PC-9 (cell line): ENCODE measurements at regions of chr1 and their contacts with region 1.

Region 1: GRCh38 chr1:15152318-15153183 is 996 bp upstream of the TMEM51 start:
- DNase-seq: peak; percentile 73 to 80
- H3K4me3 ChIP-seq: peak overlapping the region; percentile 68
- H3K27ac ChIP-seq: peak overlapping the region; percentile 77
- H3K4me1 ChIP-seq: 0 out of 2 replicates have a peak, but pooled peaks cover under 1% of the 10 kb centered on the region
- H3K27me3 ChIP-seq: no peaks in the 10 kb centered on the region
- CTCF ChIP-seq: peak; percentile 61

Region 2: DNA sequence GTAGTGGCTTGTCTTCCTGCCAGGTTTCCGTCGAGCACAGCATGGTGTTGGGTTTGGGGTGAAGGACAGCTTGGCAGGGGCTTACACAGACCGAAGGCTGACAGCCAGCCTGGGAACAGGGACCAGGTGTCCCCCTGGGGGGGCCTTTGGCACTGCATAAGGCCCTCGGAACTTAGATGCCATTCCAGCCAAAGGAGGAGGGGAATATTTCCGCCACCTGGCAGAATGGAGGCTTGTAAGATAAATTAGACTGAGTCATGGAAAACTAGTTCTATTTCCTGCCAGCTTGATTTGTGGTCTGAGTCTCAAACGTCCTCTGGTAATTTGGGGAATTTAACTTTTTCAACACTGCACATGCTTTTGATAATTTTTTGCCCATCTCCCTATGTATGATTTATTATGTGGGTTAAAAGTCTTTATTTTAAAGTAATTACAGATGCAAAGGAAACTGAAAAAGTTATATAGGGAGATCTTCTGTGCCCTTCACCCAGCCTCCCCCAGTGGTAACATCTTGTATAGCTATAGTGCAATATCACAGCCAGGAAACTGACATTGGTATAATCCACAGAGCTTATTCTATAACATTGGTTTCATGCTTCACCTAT is 10.5 kb before region 1 on chr1:
- CTCF ChIA-PET with region 1: interaction called, 3 read pairs
- POLR2A ChIA-PET with region 1: interaction called, 10 read pairs
- intact Hi-C with region 1: no loop called
- DNase-seq: peak; percentile 29 to 55
- H3K4me3 ChIP-seq: no peak overlapping the region
- H3K27ac ChIP-seq: no peak overlapping the region
- H3K4me1 ChIP-seq: peaks cover 28% of the 10 kb centered on the region
- H3K27me3 ChIP-seq: no peaks in the 10 kb centered on the region
- CTCF ChIP-seq: no peak; the same call in 1 of the 2 replicates

Region 3: DNA sequence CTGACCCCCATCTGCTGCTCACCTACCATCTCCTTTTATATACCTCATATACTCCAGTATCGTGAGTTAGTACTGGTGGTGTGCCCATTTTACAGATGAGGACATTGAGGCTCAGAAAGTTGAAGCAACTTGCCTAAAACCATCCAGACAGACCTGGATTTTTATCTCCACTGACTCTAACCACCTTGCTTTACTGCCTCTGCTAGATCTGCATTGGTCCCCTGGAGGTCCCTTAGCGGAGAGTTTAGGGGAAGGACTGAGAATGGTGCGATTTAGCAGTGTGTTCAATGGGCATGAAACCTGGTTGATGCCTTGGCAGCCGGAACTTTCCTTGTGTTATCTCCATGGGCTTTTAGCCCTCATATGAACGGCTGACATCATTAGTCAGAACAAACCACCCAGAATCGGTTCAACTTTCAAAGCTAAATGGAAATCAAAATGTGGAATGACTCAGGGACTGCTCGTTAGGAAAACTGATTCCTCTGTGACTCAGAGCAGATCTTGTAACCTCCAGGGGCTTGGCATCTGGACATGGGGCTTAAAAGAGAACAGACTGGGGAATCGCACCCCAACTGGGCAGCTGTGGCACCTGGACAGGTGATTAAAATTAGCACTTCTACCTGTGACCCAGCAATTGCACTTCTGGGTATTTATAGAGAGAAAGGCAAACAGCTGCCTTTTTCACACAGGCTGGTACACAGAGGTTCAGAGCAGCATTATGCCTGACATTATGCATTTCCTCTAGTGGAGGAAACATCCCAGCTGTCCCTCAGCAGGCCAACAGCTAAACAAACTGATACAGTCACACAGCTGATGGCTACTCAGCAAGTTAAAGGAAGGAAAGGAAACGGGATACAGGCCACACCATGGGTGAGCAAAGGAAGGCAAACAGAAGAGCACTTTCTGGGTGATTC is 26.3 kb after region 1 on chr1:
- CTCF ChIA-PET with region 1: no interaction called
- POLR2A ChIA-PET with region 1: interaction called, 24 read pairs
- intact Hi-C with region 1: loop called (anchors 2 kb)
- DNase-seq: peak; percentile 61 to 89
- H3K4me3 ChIP-seq: no peak overlapping the region
- H3K27ac ChIP-seq: peak overlapping the region; percentile 83
- H3K4me1 ChIP-seq: peaks cover 25% of the 10 kb centered on the region
- H3K27me3 ChIP-seq: no peaks in the 10 kb centered on the region
- CTCF ChIP-seq: no peak

Region 4: GRCh38 chr1:15206418-15207030 is 54.0 kb after region 1 on chr1:
- CTCF ChIA-PET with region 1: interaction called, 3 read pairs
- POLR2A ChIA-PET with region 1: interaction called, 3 read pairs
- intact Hi-C with region 1: loop called (anchors 1 kb)
- DNase-seq: peak; percentile 59 to 88
- H3K4me3 ChIP-seq: no peak overlapping the region; the same call in 1 of the 2 replicates
- H3K27ac ChIP-seq: peak overlapping the region; percentile 68
- H3K4me1 ChIP-seq: peaks cover 33% of the 10 kb centered on the region
- H3K27me3 ChIP-seq: no peaks in the 10 kb centered on the region
- CTCF ChIP-seq: no peak

Region 5: DNA sequence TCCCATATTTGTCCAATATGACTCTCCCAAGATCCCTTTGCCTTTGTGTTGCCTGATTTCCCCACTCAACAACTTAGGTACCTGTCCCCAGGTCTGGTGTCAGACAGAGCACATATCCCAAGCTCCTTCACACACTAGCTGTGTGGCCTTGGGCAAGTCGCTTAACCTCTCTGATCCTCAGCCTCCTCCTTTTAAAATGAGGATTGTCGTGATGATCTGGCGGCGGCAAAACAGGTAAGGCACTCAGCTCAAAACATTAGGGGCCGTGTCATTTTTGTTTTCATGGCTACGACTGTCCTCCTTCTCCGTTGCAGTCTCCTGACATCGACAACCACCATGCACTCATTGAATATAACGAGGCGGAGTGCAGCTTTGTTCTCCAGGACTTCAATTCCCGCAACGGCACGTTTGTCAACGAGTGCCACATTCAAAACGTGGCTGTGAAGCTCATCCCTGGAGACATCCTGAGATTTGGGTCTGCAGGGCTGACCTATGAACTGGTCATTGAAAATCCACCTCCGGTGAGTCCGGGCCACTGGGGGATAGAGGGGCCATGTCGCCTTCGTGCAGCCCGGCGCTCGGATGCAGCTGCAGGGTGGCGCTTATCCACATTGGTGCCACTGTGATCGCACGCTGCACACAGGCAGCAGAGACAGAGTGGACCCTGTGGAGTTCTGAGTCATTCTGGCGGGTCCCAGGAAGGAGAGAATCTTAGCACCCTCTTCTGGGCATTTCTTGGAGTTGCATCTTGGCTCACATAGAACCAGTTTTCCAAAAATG is 119.6 kb after region 1 on chr1:
- CTCF ChIA-PET with region 1: interaction called, 6 read pairs
- POLR2A ChIA-PET with region 1: no interaction called
- intact Hi-C with region 1: loop called (anchors 1 kb)
- DNase-seq: peak; percentile 54 to 65
- H3K4me3 ChIP-seq: no peak overlapping the region
- H3K27ac ChIP-seq: no peak overlapping the region
- H3K4me1 ChIP-seq: no peaks in the 10 kb centered on the region
- H3K27me3 ChIP-seq: no peaks in the 10 kb centered on the region
- CTCF ChIP-seq: peak; percentile 77

Region 6: GRCh38 chr1:15417365-15417934 is 264.9 kb after region 1 on chr1:
- CTCF ChIA-PET with region 1: no interaction called
- POLR2A ChIA-PET with region 1: no interaction called
- intact Hi-C with region 1: loop called (anchors 5 kb)
- DNase-seq: peak; percentile 75 to 76
- H3K4me3 ChIP-seq: peak overlapping the region; percentile 39; the same call in 1 of the 2 replicates
- H3K27ac ChIP-seq: peak overlapping the region; percentile 87
- H3K4me1 ChIP-seq: peaks cover 43% of the 10 kb centered on the region
- H3K27me3 ChIP-seq: no peaks in the 10 kb centered on the region
- CTCF ChIP-seq: no peak